ENCODE measurements at regions of chr5 and their contacts with region 1.

Region 1: GRCh38 chr5:10856683-10857337 is 95.8 kb upstream of the DAP start:
- DNase-seq: peak in 4 of 9 experiments; percentile 6 to 22 (median 20)
- ATAC-seq: no peak
- H3K4me3 ChIP-seq: no peak overlapping the region
- H3K4me3 Mint-ChIP-seq: no peak overlapping the region
- H3K27ac ChIP-seq: no peak overlapping the region
- H3K27ac Mint-ChIP-seq: no peak overlapping the region
- H3K4me1 ChIP-seq: no peaks in the 10 kb centered on the region
- H3K4me1 Mint-ChIP-seq: no peaks in the 10 kb centered on the region
- H3K27me3 ChIP-seq: no peaks in the 10 kb centered on the region
- H3K27me3 Mint-ChIP-seq: peaks cover 14% of the 10 kb centered on the region
- CTCF ChIP-seq: peak; percentile 41

Region 2: GRCh38 chr5:10701567-10702039 is 155.2 kb before region 1 on chr5:
- CTCF ChIA-PET with region 1: no interaction called
- POLR2A ChIA-PET with region 1: no interaction called
- intact Hi-C with region 1: loop called in 1 of 2 experiments (anchors 10 kb)
- DNase-seq: peak in 5 of 9 experiments; percentile 13 to 56 (median 36)
- ATAC-seq: no peak
- H3K4me3 ChIP-seq: no peak overlapping the region
- H3K4me3 Mint-ChIP-seq: no peak overlapping the region
- H3K27ac ChIP-seq: no peak overlapping the region
- H3K27ac Mint-ChIP-seq: no peak overlapping the region
- H3K4me1 ChIP-seq: peaks cover 21% of the 10 kb centered on the region
- H3K4me1 Mint-ChIP-seq: peaks cover 50% of the 10 kb centered on the region
- H3K27me3 ChIP-seq: no peaks in the 10 kb centered on the region
- H3K27me3 Mint-ChIP-seq: no peaks in the 10 kb centered on the region
- CTCF ChIP-seq: peak; percentile 70

Region 3: DNA sequence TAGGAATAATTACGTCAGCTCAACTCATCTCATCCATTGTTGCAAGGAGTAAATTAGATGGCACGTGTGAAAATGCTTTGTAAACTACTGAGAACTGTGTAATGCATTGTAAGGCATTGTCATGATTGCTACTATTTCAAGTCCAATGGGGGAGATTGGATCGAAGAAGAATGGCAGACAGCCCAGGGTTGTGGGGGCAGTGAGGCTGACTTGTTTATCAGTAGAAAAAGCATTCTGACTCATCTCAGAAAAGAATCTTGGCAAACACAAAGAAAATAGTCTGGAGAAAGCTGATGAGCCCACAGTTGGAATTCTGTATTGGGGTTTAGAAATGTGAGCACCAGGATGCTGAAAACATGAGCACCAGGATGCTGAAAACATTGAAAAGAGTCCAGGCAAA is 67.8 kb before region 1 on chr5:
- CTCF ChIA-PET with region 1: no interaction called
- POLR2A ChIA-PET with region 1: no interaction called
- intact Hi-C with region 1: no loop called
- DNase-seq: no peak
- ATAC-seq: no peak
- H3K4me3 ChIP-seq: no peak overlapping the region
- H3K4me3 Mint-ChIP-seq: no peak overlapping the region
- H3K27ac ChIP-seq: no peak overlapping the region
- H3K27ac Mint-ChIP-seq: no peak overlapping the region
- H3K4me1 ChIP-seq: peaks cover 4% of the 10 kb centered on the region
- H3K4me1 Mint-ChIP-seq: peaks cover 7% of the 10 kb centered on the region
- H3K27me3 ChIP-seq: no peaks in the 10 kb centered on the region
- H3K27me3 Mint-ChIP-seq: no peaks in the 10 kb centered on the region
- CTCF ChIP-seq: no peak

Region 4: DNA sequence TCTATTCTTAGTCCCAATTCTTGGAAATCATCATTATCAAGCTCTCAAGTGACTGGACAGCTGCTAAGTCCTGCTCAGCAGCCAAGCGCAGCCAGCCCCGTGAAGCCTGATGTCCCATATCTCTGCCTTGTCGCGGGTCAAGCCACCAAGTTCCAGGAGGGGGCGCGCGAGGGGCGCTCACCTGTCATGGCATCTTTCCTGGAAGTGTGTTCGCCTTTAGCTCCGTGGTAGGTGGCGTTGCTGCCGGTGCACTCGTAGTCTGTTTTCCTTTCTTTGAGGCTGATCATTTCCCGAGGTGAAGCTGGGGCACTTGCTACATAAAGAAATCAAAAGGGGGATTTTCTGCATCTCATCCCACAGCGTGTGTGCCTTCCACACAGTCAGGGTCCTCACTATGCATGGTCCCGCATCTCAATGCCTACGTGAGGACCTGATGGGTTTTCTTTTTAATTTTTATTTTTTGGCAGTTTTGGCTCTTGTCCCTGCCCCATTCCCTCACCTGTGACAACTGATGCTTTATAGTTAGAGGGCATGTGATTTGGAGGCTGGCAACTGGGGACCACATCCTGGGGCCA is 131.2 kb after region 1 on chr5:
- CTCF ChIA-PET with region 1: no interaction called
- POLR2A ChIA-PET with region 1: no interaction called
- intact Hi-C with region 1: no loop called
- DNase-seq: peak; percentile 14 to 66 (median 52)
- ATAC-seq: peak; percentile 69
- H3K4me3 ChIP-seq: no peak overlapping the region
- H3K4me3 Mint-ChIP-seq: peak overlapping the region; percentile 62
- H3K27ac ChIP-seq: no peak overlapping the region
- H3K27ac Mint-ChIP-seq: no peak overlapping the region
- H3K4me1 ChIP-seq: peaks cover 7% of the 10 kb centered on the region
- H3K4me1 Mint-ChIP-seq: peaks cover 11% of the 10 kb centered on the region
- H3K27me3 ChIP-seq: peaks cover 0 to 8% of the 10 kb centered on the region in 2 experiments
- H3K27me3 Mint-ChIP-seq: peaks cover 21% of the 10 kb centered on the region
- CTCF ChIP-seq: peak; percentile 41

Region 5: GRCh38 chr5:11494340-11494739 is 637.5 kb after region 1 on chr5:
- CTCF ChIA-PET with region 1: no interaction called
- POLR2A ChIA-PET with region 1: no interaction called
- intact Hi-C with region 1: no loop called
- DNase-seq: no peak
- ATAC-seq: no peak
- H3K4me3 ChIP-seq: no peak overlapping the region
- H3K4me3 Mint-ChIP-seq: no peak overlapping the region
- H3K27ac ChIP-seq: no peak overlapping the region
- H3K27ac Mint-ChIP-seq: no peak overlapping the region
- H3K4me1 ChIP-seq: no peaks in the 10 kb centered on the region
- H3K4me1 Mint-ChIP-seq: no peaks in the 10 kb centered on the region
- H3K27me3 ChIP-seq: no peaks in the 10 kb centered on the region
- H3K27me3 Mint-ChIP-seq: no peaks in the 10 kb centered on the region
- CTCF ChIP-seq: no peak

Measured in CD8-positive, alpha-beta T cell (primary cell).